Calu3 (cell line): ENCODE measurements at regions of chr20 and their contacts with region 1.

Region 1: DNA sequence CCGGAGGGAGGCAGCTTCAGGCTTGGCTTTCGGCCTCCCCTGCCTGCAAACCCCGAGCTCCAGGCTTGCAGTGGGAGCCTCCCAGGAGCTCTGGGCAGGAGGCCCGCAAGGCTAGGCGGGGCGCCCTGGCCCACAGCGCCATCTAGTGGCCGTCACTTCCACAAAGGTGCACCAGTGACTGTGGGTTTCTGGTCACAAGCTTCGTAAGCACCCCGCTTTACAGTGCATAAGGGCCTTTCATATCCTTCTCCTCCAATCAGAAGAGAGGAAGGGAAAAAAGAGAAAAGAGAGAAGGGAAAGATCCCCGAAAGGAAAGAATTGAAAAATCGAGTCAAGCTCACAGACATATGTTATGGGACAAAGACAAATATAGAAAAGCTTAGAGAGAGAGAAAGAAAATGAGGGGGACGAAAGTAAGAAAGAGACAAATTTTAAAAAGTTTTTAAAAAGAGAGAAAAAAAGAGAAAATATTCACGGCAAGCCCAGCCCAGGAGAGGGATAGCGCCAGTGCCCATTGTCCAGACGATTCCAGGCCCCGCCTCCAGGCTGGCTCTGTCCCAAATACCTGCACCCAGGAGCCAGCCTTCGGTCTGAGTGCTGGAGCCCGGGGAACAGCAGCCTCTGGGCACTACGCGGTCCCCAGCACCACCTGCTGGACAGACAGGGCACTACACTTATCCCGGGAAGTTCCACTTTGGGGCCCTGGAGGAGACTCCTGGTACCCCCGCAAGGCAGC is 207.1 kb downstream of the PREX1 start:
- DNase-seq: peak; percentile 99
- H3K4me3 Mint-ChIP-seq: peak overlapping the region; percentile 65
- H3K27ac Mint-ChIP-seq: peak overlapping the region; percentile 83
- H3K4me1 Mint-ChIP-seq: peaks cover 21% of the 10 kb centered on the region
- H3K27me3 Mint-ChIP-seq: no peaks in the 10 kb centered on the region
- CTCF ChIP-seq: peak; percentile 97

Region 2: GRCh38 chr20:47663333-47664067 is 957.2 kb before region 1 on chr20:
- CTCF ChIA-PET with region 1: interaction called, 11 read pairs
- intact Hi-C with region 1: loop called (anchors 5 kb)
- DNase-seq: peak; percentile 92
- H3K4me3 Mint-ChIP-seq: no peak overlapping the region
- H3K27ac Mint-ChIP-seq: no peak overlapping the region
- H3K4me1 Mint-ChIP-seq: peaks cover 8% of the 10 kb centered on the region
- H3K27me3 Mint-ChIP-seq: no peaks in the 10 kb centered on the region
- CTCF ChIP-seq: peak; percentile 99

Region 3: GRCh38 chr20:47785854-47786764 is 834.6 kb before region 1 on chr20:
- CTCF ChIA-PET with region 1: interaction called, 27 read pairs
- intact Hi-C with region 1: loop called (anchors 1 kb)
- DNase-seq: peak; percentile 91
- H3K4me3 Mint-ChIP-seq: peak overlapping the region; percentile 84
- H3K27ac Mint-ChIP-seq: peak overlapping the region; percentile 88
- H3K4me1 Mint-ChIP-seq: peaks cover 38% of the 10 kb centered on the region
- H3K27me3 Mint-ChIP-seq: no peaks in the 10 kb centered on the region
- CTCF ChIP-seq: peak; percentile 93

Region 4: GRCh38 chr20:48295445-48295963 is 325.2 kb before region 1 on chr20:
- CTCF ChIA-PET with region 1: interaction called, 64 read pairs
- intact Hi-C with region 1: loop called (anchors 2 kb)
- DNase-seq: peak; percentile 79
- H3K4me3 Mint-ChIP-seq: no peak overlapping the region
- H3K27ac Mint-ChIP-seq: peak overlapping the region; percentile 75
- H3K4me1 Mint-ChIP-seq: peaks cover 75% of the 10 kb centered on the region
- H3K27me3 Mint-ChIP-seq: peaks cover 4% of the 10 kb centered on the region
- CTCF ChIP-seq: peak; percentile 54

Region 5: GRCh38 chr20:48483700-48484066 is 137.0 kb before region 1 on chr20:
- CTCF ChIA-PET with region 1: interaction called, 15 read pairs
- intact Hi-C with region 1: loop called (anchors 2 kb)
- DNase-seq: no peak
- H3K4me3 Mint-ChIP-seq: no peak overlapping the region
- H3K27ac Mint-ChIP-seq: no peak overlapping the region
- H3K4me1 Mint-ChIP-seq: peaks cover 46% of the 10 kb centered on the region
- H3K27me3 Mint-ChIP-seq: peaks cover 60% of the 10 kb centered on the region
- CTCF ChIP-seq: no peak

Region 6: GRCh38 chr20:48574393-48574792 is 46.3 kb before region 1 on chr20:
- CTCF ChIA-PET with region 1: interaction called, 13 read pairs
- intact Hi-C with region 1: no loop called
- DNase-seq: peak; percentile 20
- H3K4me3 Mint-ChIP-seq: no peak overlapping the region
- H3K27ac Mint-ChIP-seq: no peak overlapping the region
- H3K4me1 Mint-ChIP-seq: no peaks in the 10 kb centered on the region
- H3K27me3 Mint-ChIP-seq: peaks cover 60% of the 10 kb centered on the region
- CTCF ChIP-seq: no peak

Region 7: GRCh38 chr20:48601057-48601456 is 19.6 kb before region 1 on chr20:
- CTCF ChIA-PET with region 1: no interaction called
- intact Hi-C with region 1: no loop called
- DNase-seq: no peak
- H3K4me3 Mint-ChIP-seq: no peak overlapping the region
- H3K27ac Mint-ChIP-seq: no peak overlapping the region
- H3K4me1 Mint-ChIP-seq: peaks cover 26% of the 10 kb centered on the region
- H3K27me3 Mint-ChIP-seq: peaks cover 45% of the 10 kb centered on the region
- CTCF ChIP-seq: no peak

Region 8: DNA sequence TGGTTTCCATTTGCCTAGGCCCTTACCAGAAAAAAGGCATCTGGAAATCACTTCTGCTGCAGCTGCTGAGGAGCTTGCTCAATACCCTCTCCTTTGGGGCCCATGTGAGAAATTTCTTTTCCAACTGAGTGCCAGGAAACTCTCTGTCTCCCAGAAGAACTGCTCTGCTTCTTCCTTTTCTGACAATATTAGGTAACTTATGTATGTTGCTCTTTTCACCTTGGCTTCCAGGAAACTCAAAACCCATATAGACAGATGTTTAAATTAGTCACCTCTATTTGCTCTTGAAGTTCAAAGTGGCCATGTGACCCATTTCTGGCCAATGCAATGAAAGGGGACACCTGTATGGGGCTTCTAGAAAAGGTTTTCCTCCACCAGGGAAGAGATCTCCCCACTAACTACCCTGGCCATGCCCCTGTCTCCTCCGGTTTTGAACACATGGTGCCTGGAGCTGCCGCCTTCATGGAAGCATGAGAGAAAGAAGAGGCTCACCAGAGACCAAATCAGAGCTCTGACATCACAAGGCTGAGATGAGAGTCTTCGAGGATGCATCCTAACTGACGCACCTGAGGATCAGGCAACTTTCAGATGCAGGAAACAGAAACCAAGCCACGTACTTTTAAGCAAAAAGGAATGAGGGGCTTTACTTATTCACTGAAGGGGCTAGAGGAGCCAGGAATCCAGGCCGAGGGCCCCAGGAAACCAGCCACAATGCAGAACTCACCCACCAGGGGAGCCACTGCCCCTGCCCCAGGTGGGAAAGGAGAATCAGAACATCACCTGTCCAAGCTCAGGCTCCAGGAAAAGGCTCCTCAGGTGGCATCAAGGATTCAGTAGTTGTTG is 85.7 kb after region 1 on chr20:
- CTCF ChIA-PET with region 1: no interaction called
- intact Hi-C with region 1: no loop called
- DNase-seq: no peak
- H3K4me3 Mint-ChIP-seq: no peak overlapping the region
- H3K27ac Mint-ChIP-seq: no peak overlapping the region
- H3K4me1 Mint-ChIP-seq: no peaks in the 10 kb centered on the region
- H3K27me3 Mint-ChIP-seq: peaks cover 63% of the 10 kb centered on the region
- CTCF ChIP-seq: no peak